ENCODE measurements at regions of chr3 and their contacts with region 1.

Region 1: GRCh38 chr3:11155341-11156025 is 1.2 kb downstream of the HRH1 start:
- DNase-seq: peak in 2 of 3 donors; percentile 53 to 55
- H3K4me3 ChIP-seq: peak overlapping the region in 1 of 7 experiments; percentile 47
- H3K27ac ChIP-seq: no peak overlapping the region
- H3K4me1 ChIP-seq: peaks cover 0 to 28% (median 14%) of the 10 kb centered on the region in 4 experiments
- H3K27me3 ChIP-seq: peaks cover 0 to 46% (median 15%) of the 10 kb centered on the region in 5 experiments

Region 2: DNA sequence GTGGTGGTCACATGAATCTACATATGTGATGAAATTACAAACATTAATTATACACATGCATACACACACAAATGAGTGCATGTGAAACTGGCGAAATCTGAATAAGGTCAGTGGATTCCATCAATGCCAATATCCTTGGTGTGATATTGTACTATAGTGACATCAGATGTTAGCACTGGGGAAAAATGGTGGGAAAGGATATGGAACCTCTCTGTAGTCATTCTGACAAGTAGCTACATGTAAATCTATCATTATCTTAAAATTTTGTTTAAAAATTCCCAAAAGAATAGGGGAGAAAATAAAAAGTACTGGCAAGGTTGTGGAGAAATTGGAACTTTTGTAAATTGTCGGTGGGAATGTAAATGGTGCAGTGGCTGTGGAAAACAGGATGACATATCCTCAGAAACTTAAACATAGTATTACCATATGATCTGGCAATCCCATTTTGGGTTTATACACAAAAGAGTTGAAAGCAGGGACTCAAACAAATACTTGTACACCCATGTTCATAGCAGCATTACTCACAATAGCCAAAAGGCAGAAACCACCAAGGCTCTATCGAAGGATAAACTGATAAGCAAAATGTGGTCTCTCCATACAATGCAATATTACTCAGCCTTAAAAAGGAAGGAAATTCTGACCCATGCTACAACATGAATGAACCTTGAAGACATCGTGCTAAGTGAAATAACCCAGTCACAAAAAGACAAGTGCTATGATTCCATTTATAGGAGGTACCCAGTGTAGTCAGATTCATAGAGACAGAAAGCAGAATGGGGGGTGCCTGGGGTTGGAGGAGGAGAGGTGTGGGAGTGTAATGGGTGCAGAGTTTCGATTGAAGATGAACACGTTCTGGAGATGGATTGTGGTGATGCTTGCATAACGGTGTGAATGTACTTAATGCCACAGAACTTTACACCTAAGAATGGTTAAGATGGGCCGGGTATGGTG is 26.5 kb before region 1 on chr3:
- CTCF ChIA-PET with region 1: no interaction called
- POLR2A ChIA-PET with region 1: no interaction called
- DNase-seq: no peak
- H3K4me3 ChIP-seq: no peak overlapping the region
- H3K27ac ChIP-seq: no peak overlapping the region
- H3K4me1 ChIP-seq: no peaks in the 10 kb centered on the region
- H3K27me3 ChIP-seq: no peaks in the 10 kb centered on the region

Region 3: DNA sequence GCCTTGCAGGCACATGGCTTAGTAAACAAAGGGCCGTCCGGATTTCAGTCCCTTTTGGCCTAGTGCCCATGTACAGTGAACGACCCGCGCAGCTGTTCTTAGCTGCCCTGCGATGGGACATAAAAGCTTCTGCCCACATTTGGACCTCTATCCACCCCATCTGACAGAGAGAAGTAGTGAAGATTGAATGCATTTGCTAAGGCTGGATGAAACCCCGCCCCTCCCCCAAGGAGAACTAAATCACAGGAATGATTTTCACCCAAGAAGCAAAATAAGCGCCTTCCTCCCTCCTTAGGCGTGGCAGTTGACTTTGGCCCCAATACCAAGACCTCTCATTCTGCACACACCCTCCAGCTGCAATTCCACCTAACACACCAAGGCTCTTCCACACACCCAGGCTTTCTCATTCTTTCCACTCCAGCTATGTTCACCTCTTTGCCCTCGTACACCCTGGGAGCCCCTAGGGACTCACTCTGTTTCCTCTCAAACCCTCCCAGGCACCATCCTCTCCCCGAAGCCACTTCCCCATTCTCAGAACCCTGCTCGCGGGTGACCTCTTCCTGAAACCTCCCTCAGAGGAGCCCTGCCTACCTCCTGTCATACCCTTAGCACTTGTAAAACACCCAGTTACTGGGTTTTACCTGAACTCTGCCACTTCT is 15.3 kb before region 1 on chr3:
- CTCF ChIA-PET with region 1: interaction called, 10 read pairs
- POLR2A ChIA-PET with region 1: no interaction called
- DNase-seq: peak; percentile 65 to 88 (median 86)
- H3K4me3 ChIP-seq: peak overlapping the region in 4 of 7 experiments; percentile 19 to 38 (median 22)
- H3K27ac ChIP-seq: no peak overlapping the region
- H3K4me1 ChIP-seq: peaks cover 8 to 33% (median 19%) of the 10 kb centered on the region in 4 experiments
- H3K27me3 ChIP-seq: no peaks in the 10 kb centered on the region

Region 4: DNA sequence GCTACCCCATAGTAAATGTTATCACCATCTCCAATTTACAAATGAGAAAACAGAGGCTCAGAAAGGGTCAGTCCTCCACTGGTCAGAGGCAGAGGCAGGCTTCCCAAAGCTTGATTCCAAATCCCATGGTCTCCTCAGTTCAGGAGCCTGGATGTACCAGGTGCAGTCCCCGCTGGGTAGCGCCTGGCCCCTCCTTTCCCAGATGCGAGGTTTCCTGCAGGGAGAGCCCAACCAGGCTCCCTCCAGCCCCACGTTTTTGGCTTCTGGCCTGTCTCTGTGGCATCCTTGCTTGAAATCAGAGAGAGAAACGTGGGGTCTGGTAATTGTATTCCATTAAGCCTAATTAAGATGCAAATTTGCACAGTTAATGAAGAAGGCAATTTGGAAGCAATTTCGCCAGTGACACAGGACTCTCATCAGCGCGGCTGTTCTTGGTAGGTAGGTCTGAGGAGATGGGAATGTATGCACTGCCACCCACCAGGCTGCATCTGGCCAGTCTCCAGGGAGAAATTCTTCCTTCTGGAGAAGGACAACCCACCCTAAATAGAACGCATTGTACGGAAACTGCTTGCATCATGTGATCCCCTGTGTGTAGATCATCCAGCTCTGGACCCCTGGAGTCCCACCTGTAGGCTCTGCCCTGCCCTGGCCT is 49.3 kb after region 1 on chr3:
- CTCF ChIA-PET with region 1: interaction called, 13 read pairs
- POLR2A ChIA-PET with region 1: no interaction called
- DNase-seq: no peak
- H3K4me3 ChIP-seq: no peak overlapping the region
- H3K27ac ChIP-seq: no peak overlapping the region
- H3K4me1 ChIP-seq: peaks cover 0 to 5% (median 0%) of the 10 kb centered on the region in 4 experiments
- H3K27me3 ChIP-seq: peaks cover 0 to 2% (median 0%) of the 10 kb centered on the region in 5 experiments

Region 5: DNA sequence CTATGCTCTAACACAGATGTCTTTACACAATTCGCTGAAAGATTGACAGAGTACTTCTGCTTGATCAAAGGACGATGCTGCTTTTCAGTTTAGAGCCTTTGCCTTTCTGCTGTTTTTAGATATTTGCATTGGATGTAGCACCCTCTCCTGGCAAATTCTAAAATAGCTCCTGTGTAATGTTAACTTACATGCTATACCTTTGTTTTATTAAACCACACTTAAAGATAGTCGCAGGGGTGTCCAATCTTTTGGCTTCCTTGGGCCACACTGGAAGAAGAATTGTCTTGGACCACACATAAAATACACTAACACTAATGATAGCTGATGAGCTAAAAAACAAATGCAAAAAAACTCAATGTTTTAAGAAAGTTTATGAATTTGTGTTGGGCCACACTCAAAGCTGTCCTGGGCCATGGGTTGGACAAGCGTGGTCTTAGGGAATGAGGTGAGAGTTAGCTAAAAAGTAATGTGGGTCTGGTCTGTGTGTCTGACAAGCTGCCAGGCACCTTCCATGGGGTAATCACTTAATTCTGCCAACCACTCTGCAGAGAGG is 179.6 kb after region 1 on chr3:
- CTCF ChIA-PET with region 1: interaction called, 10 read pairs
- POLR2A ChIA-PET with region 1: no interaction called
- DNase-seq: peak; percentile 45 to 80 (median 77)
- H3K4me3 ChIP-seq: no peak overlapping the region
- H3K27ac ChIP-seq: no peak overlapping the region
- H3K4me1 ChIP-seq: peaks cover 0 to 6% (median 0%) of the 10 kb centered on the region in 4 experiments
- H3K27me3 ChIP-seq: no peaks in the 10 kb centered on the region

Region 6: GRCh38 chr3:11495948-11496557 is 340.6 kb after region 1 on chr3:
- CTCF ChIA-PET with region 1: no interaction called
- POLR2A ChIA-PET with region 1: no interaction called
- DNase-seq: no peak
- H3K4me3 ChIP-seq: no peak overlapping the region
- H3K27ac ChIP-seq: no peak overlapping the region
- H3K4me1 ChIP-seq: peaks cover 0 to 2% (median 0%) of the 10 kb centered on the region in 4 experiments
- H3K27me3 ChIP-seq: no peaks in the 10 kb centered on the region